Dendritic cell treated with granulocyte-macrophage colony-stimulating factor and Interleukin-4, amounts not matched to agents 40 ng/mL and 50 ng/mL, for 4 days (primary cell): ENCODE measurements at regions of chr3 and their contacts with region 1.

Region 1: GRCh38 chr3:42012935-42013690 is 51.2 kb upstream of the ULK4 start:
- H3K4me3 Mint-ChIP-seq: peak overlapping the region; percentile 95
- H3K27ac Mint-ChIP-seq: peak overlapping the region; percentile 100
- H3K4me1 Mint-ChIP-seq: peaks cover 61% of the 10 kb centered on the region
- H3K27me3 Mint-ChIP-seq: no peaks in the 10 kb centered on the region

Region 2: DNA sequence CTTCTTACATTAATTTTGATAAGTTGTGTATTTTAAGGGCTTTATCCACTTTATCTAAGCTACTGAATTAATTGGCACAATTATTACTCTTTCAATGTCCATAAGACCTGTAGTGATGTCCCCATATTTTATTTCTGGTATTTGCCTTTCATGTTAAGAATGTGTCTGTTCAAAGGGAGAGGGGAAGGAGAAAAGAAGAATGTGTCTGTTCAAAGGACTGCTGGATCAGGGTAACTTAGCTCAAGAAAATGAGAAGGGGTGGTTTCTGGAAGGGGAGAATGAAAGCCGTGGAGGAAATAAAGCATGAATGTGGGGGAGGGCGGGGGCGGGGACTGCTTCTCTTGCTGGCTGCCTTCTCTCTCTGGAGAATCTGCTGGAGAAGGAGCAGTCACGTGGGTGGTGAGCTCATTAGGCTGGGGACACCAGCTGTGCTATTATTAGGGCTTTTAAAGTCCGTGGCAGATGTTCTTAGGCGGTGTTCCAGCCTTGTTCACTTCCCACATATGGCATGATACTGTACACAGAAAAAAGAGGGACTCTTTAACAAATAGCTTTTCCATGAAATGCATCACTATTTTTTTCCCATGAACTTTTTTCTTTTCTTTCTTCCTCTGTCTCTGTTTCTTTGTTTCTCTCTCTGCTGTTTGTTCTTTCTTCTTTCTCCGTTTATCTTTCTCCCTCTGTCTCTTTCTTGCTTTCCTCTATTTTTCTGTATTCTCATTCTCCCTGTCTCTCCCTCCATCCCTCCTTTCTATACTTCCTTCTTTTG is 12.4 kb after region 1 on chr3:
- intact Hi-C with region 1: loop called (anchors 1 kb)
- H3K4me3 Mint-ChIP-seq: peak overlapping the region; percentile 66
- H3K27ac Mint-ChIP-seq: peak overlapping the region; percentile 92
- H3K4me1 Mint-ChIP-seq: peaks cover 67% of the 10 kb centered on the region
- H3K27me3 Mint-ChIP-seq: no peaks in the 10 kb centered on the region

Region 3: GRCh38 chr3:42043027-42043796 is 30.1 kb after region 1 on chr3:
- intact Hi-C with region 1: no loop called
- H3K4me3 Mint-ChIP-seq: no peak overlapping the region
- H3K27ac Mint-ChIP-seq: no peak overlapping the region
- H3K4me1 Mint-ChIP-seq: peaks cover 23% of the 10 kb centered on the region
- H3K27me3 Mint-ChIP-seq: no peaks in the 10 kb centered on the region

Region 4: DNA sequence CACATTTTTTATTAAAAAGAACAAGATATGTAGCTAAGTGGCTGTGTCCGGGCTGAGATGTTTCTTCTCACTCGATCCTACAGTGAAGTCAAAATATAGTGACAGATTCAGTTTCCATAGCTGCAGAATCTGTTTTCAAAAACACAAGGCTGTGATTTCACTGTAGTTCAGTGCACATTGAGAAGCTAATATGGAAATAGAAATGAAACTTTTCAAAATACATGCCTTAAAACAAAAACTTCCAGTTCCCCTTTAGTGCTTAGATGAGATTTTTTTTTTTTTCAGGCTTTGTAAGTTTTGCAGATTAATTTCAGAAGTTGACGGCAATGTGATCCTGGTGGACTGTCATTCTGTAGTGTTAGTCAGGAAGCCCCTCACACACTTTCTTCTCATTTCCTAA is 54.2 kb after region 1 on chr3:
- intact Hi-C with region 1: loop called (anchors 1 kb)
- H3K4me3 Mint-ChIP-seq: no peak overlapping the region
- H3K27ac Mint-ChIP-seq: peak overlapping the region; percentile 86
- H3K4me1 Mint-ChIP-seq: peaks cover 58% of the 10 kb centered on the region
- H3K27me3 Mint-ChIP-seq: no peaks in the 10 kb centered on the region

Region 5: GRCh38 chr3:42096796-42097565 is 83.9 kb after region 1 on chr3:
- intact Hi-C with region 1: loop called (anchors 5 kb)
- H3K4me3 Mint-ChIP-seq: no peak overlapping the region
- H3K27ac Mint-ChIP-seq: no peak overlapping the region
- H3K4me1 Mint-ChIP-seq: peaks cover 61% of the 10 kb centered on the region
- H3K27me3 Mint-ChIP-seq: no peaks in the 10 kb centered on the region